ENCODE measurements at regions of chr22 and their contacts with region 1.

Region 1: DNA sequence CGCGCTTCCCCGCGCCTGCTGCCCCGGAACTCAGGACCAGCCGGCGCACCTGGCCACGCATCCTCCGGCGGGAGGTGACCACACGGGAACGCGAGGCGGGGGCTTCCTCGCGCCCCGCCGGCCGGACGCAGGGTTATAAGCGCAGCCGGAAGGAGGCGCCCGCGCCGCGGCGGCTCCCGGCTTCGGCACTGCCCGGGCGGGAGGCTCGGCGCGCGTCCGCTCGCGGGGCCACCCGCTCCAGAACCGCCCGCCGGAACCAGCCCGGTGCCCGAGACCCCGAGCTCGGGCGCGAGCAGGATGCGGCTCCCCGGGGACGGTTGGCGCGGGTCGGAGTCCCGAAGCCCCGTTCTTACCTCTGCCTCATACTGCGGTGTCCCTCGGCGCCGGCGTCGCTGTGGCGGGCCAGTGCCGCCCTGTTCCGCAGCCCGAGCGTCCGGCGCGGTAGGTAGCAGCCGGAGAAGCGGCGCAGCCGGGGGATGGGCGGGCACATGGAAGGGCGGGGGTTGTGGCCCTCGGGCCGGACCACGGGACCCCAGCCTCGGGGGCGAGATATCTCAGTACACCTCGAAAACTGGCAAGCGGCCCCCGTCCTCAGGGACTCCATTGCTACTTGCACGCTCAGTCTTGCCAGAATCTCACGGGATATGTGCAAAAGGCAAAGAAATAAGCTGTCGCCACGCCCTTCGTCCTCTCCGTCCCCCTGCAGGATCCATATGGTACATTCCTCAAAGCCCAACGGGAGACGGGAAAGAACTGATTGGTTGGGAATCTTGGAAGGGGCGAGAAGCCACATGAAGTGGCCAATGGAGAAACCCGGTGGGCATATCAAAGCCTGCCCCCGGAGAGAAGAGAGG is 23.1 kb downstream of the MICAL3 start:
- DNase-seq: peak; percentile 65 to 94
- H3K4me3 ChIP-seq: peak overlapping the region; percentile 70 to 98
- H3K27ac ChIP-seq: peak overlapping the region; percentile 88 to 92
- H3K4me1 ChIP-seq: peaks cover 0 to 11% of the 10 kb centered on the region in 2 donors
- H3K27me3 ChIP-seq: no peaks in the 10 kb centered on the region
- CTCF ChIP-seq: peak; percentile 37 to 58 (median 50)

Region 2: GRCh38 chr22:18024276-18024947 is 23.1 kb after region 1 on chr22 and contains the start of gene MICAL3:
- intact Hi-C with region 1: loop called (anchors 1 kb)
- DNase-seq: peak in 1 of 2 donors; percentile 75
- H3K4me3 ChIP-seq: peak within 1 kb of the TSS; percentile 71 to 88
- H3K27ac ChIP-seq: peak within 1 kb of the TSS; percentile 69
- H3K4me1 ChIP-seq: peaks cover 0 to 3% of the 10 kb centered on the region in 2 donors
- H3K27me3 ChIP-seq: no peaks in the 10 kb centered on the region
- CTCF ChIP-seq: peak; percentile 26 to 62 (median 51)
- total RNA-seq, gene MICAL3: 36.9 TPM

Region 3: DNA sequence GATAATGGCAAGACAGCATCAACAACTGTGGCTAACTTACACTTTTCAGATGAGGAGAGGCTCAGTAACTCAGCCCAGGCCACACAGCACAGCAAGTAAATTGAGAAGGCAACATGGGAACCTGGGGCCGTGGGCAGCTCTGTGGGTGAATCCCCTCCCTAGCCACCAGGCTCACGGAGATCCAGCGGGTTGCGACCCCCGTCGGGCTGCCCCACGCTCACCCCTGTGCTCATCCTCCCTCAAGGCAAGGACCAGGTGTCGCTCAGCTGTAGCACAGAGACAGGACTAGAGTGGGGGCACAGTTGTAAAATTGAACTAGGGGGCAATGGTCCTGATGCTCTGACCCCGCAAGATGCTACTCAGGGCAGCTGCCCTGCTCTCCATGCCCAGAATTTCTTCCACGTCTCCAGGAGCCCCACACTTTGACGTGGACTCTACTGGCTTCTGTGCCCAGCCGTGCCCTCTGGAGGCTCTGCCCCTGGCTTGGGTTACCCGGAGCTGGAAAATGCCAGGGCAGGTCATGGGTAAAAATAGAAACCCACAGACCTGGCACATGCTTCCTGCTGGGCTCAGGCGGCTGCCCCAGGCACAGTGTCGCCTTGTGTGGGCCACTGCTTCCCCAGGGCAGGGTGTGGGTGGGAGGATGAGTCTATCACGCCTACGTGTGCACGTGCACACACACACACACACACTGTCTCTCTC is 118.3 kb after region 1 on chr22:
- intact Hi-C with region 1: no loop called
- DNase-seq: no peak
- H3K4me3 ChIP-seq: no peak overlapping the region
- H3K27ac ChIP-seq: no peak overlapping the region
- H3K4me1 ChIP-seq: no peaks in the 10 kb centered on the region
- H3K27me3 ChIP-seq: no peaks in the 10 kb centered on the region
- CTCF ChIP-seq: no peak